Natural killer cell (primary cell): ENCODE measurements at regions of chr2 and their contacts with region 1.

Region 1: GRCh38 chr2:172465417-172466334 is 38.3 kb downstream of the ITGA6 start:
- DNase-seq: peak; percentile 40 to 88
- ATAC-seq: peak; percentile 68 to 80 (median 76)
- H3K4me3 ChIP-seq: no peak overlapping the region
- H3K4me3 Mint-ChIP-seq: peak overlapping the region; percentile 57
- H3K27ac ChIP-seq: no peak overlapping the region
- H3K27ac Mint-ChIP-seq: peak overlapping the region; percentile 64 to 74
- H3K4me1 ChIP-seq: peaks cover 40% of the 10 kb centered on the region
- H3K4me1 Mint-ChIP-seq: peaks cover 54% of the 10 kb centered on the region in 2 donors
- H3K27me3 ChIP-seq: no peaks in the 10 kb centered on the region
- H3K27me3 Mint-ChIP-seq: no peaks in the 10 kb centered on the region
- CTCF ChIP-seq: peak; percentile 87

Region 2: GRCh38 chr2:171574149-171574795 is 891.4 kb before region 1 on chr2:
- intact Hi-C with region 1: loop called (anchors 2 kb)
- DNase-seq: peak; percentile 80 to 88
- ATAC-seq: peak; percentile 96 to 100 (median 100)
- H3K4me3 ChIP-seq: no peak overlapping the region
- H3K4me3 Mint-ChIP-seq: no peak overlapping the region
- H3K27ac ChIP-seq: no peak overlapping the region
- H3K27ac Mint-ChIP-seq: peak overlapping the region in 1 of 2 donors; percentile 8
- H3K4me1 ChIP-seq: no peaks in the 10 kb centered on the region
- H3K4me1 Mint-ChIP-seq: no peaks in the 10 kb centered on the region
- H3K27me3 ChIP-seq: no peaks in the 10 kb centered on the region
- H3K27me3 Mint-ChIP-seq: peaks cover 0 to 2% of the 10 kb centered on the region in 2 donors
- CTCF ChIP-seq: peak; percentile 95

Region 3: GRCh38 chr2:171703574-171704347 is 761.9 kb before region 1 on chr2:
- intact Hi-C with region 1: loop called (anchors 2 kb)
- DNase-seq: peak in 1 of 2 donors; percentile 64
- ATAC-seq: peak in 1 of 3 donors; percentile 41
- H3K4me3 ChIP-seq: no peak overlapping the region
- H3K4me3 Mint-ChIP-seq: no peak overlapping the region
- H3K27ac ChIP-seq: no peak overlapping the region
- H3K27ac Mint-ChIP-seq: no peak overlapping the region
- H3K4me1 ChIP-seq: no peaks in the 10 kb centered on the region
- H3K4me1 Mint-ChIP-seq: peaks cover 8 to 10% of the 10 kb centered on the region in 2 donors
- H3K27me3 ChIP-seq: no peaks in the 10 kb centered on the region
- H3K27me3 Mint-ChIP-seq: no peaks in the 10 kb centered on the region
- CTCF ChIP-seq: peak; percentile 37

Region 4: DNA sequence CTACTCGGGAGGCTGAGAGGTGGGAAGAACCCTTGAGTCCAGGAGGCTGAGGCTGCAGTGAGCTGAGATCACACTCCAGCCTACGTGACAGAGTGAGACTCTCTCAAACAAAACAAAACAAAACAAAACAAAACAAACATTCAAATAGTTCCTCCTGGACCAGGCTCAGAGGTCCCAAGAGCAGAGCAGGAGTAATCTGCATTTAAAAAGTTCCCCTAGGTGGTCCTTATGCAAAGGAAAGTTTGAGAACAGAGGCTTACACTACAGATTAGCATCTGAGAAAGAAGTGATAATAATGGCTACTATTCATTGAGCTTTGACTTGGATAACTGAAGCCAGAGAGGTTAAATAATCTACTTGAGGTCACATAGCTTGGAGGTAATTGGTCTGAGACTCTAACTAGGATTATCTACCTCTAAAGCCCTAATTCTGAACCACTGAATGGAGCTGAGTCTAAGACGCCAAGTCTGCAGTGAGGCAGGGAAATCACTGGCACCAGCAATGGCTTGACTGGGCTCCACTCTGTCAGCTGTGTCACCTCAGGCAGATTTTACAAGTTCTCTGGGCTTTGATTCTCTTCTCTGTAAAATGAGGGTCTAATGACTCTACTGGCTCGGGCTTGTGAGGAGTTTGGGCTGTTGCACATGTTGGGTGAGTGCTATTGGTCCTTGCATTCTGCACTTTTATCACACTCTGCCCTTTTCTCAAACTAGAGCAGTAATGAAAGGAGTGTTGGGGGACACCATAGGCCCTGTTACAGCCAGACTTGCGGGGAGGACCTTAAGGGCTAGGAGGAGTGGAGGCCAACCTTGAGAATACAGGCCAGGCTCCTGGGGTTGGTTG is 333.7 kb before region 1 on chr2:
- intact Hi-C with region 1: loop called (anchors 5 kb)
- DNase-seq: no peak
- ATAC-seq: no peak
- H3K4me3 ChIP-seq: no peak overlapping the region
- H3K4me3 Mint-ChIP-seq: no peak overlapping the region
- H3K27ac ChIP-seq: no peak overlapping the region
- H3K27ac Mint-ChIP-seq: no peak overlapping the region
- H3K4me1 ChIP-seq: no peaks in the 10 kb centered on the region
- H3K4me1 Mint-ChIP-seq: no peaks in the 10 kb centered on the region
- H3K27me3 ChIP-seq: no peaks in the 10 kb centered on the region
- H3K27me3 Mint-ChIP-seq: peaks cover 15 to 17% of the 10 kb centered on the region in 2 donors
- CTCF ChIP-seq: no peak

Region 5: GRCh38 chr2:172339371-172340010 is 126.2 kb before region 1 on chr2:
- intact Hi-C with region 1: loop called (anchors 5 kb)
- DNase-seq: peak in 1 of 2 donors; percentile 37
- ATAC-seq: peak in 2 of 3 donors; percentile 53 to 54
- H3K4me3 ChIP-seq: no peak overlapping the region
- H3K4me3 Mint-ChIP-seq: peak overlapping the region; percentile 62
- H3K27ac ChIP-seq: no peak overlapping the region
- H3K27ac Mint-ChIP-seq: peak overlapping the region; percentile 19 to 51
- H3K4me1 ChIP-seq: peaks cover 6% of the 10 kb centered on the region
- H3K4me1 Mint-ChIP-seq: peaks cover 14 to 15% of the 10 kb centered on the region in 2 donors
- H3K27me3 ChIP-seq: no peaks in the 10 kb centered on the region
- H3K27me3 Mint-ChIP-seq: no peaks in the 10 kb centered on the region
- CTCF ChIP-seq: no peak

Region 6: DNA sequence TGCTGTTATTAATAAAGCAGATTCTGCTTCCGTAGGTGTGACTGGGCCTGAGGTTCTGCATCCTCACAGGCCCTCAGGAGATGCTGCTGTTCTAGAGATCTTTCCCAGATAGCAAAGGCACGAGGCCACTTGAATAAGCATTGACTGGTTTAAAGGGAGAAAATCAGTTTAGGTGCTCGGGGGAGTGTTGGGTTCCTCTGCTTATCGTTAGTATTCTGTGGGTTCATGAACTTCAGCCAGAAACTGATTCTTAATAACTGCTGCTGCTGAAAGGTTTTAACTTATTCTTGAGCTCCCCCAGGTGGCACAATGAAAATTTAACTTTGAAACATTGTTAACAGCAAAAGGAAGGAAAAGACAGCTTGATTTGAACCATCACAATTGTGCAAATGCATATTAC is 18.6 kb after region 1 on chr2:
- intact Hi-C with region 1: no loop called
- DNase-seq: peak in 1 of 2 donors; percentile 64
- ATAC-seq: no peak
- H3K4me3 ChIP-seq: no peak overlapping the region
- H3K4me3 Mint-ChIP-seq: no peak overlapping the region
- H3K27ac ChIP-seq: no peak overlapping the region
- H3K27ac Mint-ChIP-seq: no peak overlapping the region
- H3K4me1 ChIP-seq: peaks cover 6% of the 10 kb centered on the region
- H3K4me1 Mint-ChIP-seq: peaks cover 15 to 20% of the 10 kb centered on the region in 2 donors
- H3K27me3 ChIP-seq: no peaks in the 10 kb centered on the region
- H3K27me3 Mint-ChIP-seq: no peaks in the 10 kb centered on the region
- CTCF ChIP-seq: no peak